Endothelial cell of umbilical vein (primary cell): ENCODE measurements at regions of chr11 and their contacts with region 1.

Region 1: DNA sequence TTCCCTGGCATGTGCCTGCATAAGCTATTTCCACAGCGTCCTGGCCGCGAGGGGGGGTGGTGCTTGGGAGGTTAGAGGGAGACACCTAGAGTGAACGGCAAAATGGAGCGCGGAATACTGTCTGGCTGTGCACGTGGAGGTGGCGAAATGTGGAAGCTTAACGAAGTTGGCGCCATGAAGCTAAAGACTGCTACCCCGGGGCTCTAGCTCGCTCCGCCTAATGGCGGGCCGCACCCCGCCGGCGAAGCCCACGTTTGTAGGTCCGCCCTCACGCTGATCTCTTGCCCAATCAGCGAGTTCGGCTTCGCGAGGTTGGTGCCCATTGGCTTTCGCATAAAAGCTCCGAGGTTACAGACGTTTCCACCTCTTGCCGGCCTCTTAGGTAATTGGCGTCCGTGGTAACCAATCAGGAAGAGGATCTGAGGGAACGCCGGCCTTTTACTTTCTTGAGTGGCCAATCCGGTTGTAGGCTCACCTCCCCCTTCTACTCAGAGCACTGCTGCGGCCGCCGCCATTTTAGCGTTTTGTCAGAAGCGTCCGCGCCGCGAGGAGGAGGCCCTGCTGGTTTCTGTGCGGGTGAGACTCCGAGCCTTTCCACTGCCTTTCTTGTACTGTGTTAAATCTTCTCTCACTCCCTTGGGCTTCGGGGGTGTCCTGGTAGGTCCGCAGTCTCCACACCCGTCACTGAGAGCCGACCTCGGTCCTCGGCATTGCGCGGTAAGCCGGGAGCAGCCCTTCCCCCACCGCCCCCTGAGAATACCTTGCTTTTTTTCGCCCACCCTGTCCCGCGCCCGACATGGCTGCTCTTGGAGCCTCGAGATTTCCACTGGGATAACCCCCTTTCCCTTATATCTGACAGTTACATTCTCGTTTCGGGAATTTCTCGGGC is at the start of gene RBM4:
- DNase-seq: peak; percentile 100
- H3K4me3 ChIP-seq: peak within 1 kb of the TSS; percentile 84 to 94 (median 89)
- H3K27ac ChIP-seq: peak within 1 kb of the TSS; percentile 72
- H3K4me1 ChIP-seq: peaks cover 45% of the 10 kb centered on the region
- H3K27me3 ChIP-seq: no peaks in the 10 kb centered on the region
- CTCF ChIP-seq: peak in 1 of 2 donors; percentile 21
- POLR2A ChIP-seq: peak; percentile 97
- total RNA-seq, gene RBM4: 148 and 153 TPM in 2 replicates

Region 2: DNA sequence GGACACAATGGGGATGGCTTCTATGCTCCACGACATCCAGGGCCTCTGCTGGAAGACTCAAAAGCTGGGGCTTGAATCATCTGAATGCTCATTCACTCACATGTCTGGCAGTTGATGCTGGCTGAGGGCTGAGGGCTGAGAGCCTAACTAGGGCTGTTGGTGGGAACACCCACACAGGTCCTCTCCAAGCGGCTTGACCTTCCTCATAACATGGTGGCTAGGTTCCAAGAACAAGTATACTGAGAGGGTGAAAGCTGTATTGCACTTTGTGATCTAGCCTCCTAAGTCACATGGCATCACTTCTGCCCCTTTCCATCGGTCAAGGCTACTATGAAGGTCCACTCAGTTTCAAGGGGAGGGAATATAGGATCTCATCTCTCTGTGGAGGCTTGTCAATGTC is 339.2 kb before region 1 on chr11:
- CTCF ChIA-PET with region 1: no interaction called
- POLR2A ChIA-PET with region 1: no interaction called
- dilution Hi-C with region 1: no loop called
- intact Hi-C with region 1: no loop called
- DNase-seq: no peak
- H3K4me3 ChIP-seq: no peak overlapping the region
- H3K27ac ChIP-seq: no peak overlapping the region
- H3K4me1 ChIP-seq: no peaks in the 10 kb centered on the region
- H3K27me3 ChIP-seq: peaks cover 0 to 2% of the 10 kb centered on the region in 2 experiments
- CTCF ChIP-seq: no peak
- POLR2A ChIP-seq: no peak

Region 3: DNA sequence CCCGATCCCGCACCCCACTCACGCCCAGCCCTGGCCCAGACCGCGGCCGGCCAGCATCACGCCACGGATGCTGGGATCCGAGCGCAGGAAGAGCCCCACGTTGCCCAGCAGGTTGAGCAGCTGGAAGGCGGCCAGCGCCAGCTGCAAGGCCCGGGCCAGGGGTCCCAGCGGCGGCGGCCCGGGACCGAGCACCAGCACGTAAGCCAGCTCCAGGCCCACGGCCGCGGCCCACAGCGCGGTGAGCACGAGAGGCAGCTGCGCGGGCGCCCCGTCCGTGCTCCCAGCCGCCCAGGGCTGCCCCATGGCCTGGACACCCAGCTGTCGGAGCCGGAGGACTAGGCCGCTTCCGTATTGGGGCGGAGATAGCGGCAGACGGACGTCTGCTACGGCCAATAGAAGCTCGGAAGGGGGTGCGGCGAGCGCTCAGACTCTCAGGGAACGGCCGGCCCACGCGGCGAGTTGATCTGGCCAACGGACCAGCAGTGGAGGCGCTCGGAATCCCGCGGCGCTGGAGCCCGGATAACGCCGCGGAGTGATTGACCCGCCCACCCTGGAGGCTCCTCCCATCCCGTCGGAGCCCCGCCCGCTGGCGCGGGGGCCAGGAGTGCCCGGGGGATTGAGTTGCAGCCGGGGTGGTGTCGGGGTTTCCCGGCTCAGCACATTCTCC is 92.6 kb before region 1 on chr11 and contains the start of gene ZDHHC24:
- CTCF ChIA-PET with region 1: interaction called, 3 read pairs
- POLR2A ChIA-PET with region 1: interaction called, 4 read pairs
- dilution Hi-C with region 1: no loop called
- intact Hi-C with region 1: loop called (anchors 1 kb)
- DNase-seq: peak; percentile 99
- H3K4me3 ChIP-seq: peak within 1 kb of the TSS; percentile 70 to 81 (median 78)
- H3K27ac ChIP-seq: peak within 1 kb of the TSS; percentile 62
- H3K4me1 ChIP-seq: peaks cover 33% of the 10 kb centered on the region
- H3K27me3 ChIP-seq: no peaks in the 10 kb centered on the region
- CTCF ChIP-seq: no peak
- POLR2A ChIP-seq: peak; percentile 90
- total RNA-seq, gene ZDHHC24: 18.3 and 20.1 TPM in 2 replicates

Region 4: DNA sequence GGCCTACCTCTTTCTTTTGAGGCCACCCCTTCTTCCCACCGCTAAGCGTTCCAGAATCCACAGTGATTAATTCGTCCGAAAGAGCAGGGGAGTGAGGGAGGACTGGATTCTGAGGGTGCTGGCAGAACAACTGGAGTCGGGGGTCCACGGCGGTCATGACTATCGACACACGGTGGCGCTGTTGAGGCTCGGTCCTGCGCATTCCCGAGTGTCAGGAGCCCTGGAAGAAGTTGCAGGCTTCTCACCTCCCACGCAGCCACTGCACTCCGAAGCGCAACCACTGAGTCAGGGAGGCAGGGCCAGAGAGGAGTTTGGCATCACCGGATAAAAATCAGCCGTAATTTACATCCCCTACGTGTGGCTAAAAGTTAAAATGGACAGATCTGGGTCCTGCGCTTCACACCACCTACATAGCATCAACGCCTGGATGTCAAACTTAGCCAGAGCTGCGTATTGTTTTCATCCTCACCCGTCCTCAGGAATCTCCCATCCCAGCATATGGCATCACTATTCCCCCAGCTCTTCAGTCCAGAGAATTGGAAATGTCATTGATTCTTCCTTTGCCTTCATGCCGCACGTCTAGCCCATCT is 59.3 kb before region 1 on chr11:
- CTCF ChIA-PET with region 1: interaction called, 14 read pairs
- POLR2A ChIA-PET with region 1: no interaction called
- dilution Hi-C with region 1: no loop called
- intact Hi-C with region 1: no loop called
- DNase-seq: peak; percentile 69
- H3K4me3 ChIP-seq: no peak overlapping the region
- H3K27ac ChIP-seq: no peak overlapping the region
- H3K4me1 ChIP-seq: no peaks in the 10 kb centered on the region
- H3K27me3 ChIP-seq: peaks cover 0 to 2% of the 10 kb centered on the region in 2 experiments
- CTCF ChIP-seq: peak; percentile 76 to 88
- POLR2A ChIP-seq: no peak

Region 5: GRCh38 chr11:66592457-66593302 is 45.7 kb before region 1 on chr11 and contains the starts of genes CCDC87 and CCS:
- CTCF ChIA-PET with region 1: interaction called, 6 read pairs
- POLR2A ChIA-PET with region 1: no interaction called
- dilution Hi-C with region 1: no loop called
- intact Hi-C with region 1: loop called (anchors 1 kb)
- DNase-seq: peak; percentile 97
- H3K4me3 ChIP-seq: peak within 1 kb of the TSS; percentile 22 to 63 (median 60)
- H3K27ac ChIP-seq: no peak within 1 kb of the TSS
- H3K4me1 ChIP-seq: peaks cover 5% of the 10 kb centered on the region
- H3K27me3 ChIP-seq: peaks cover 0 to 2% of the 10 kb centered on the region in 2 experiments
- CTCF ChIP-seq: peak; percentile 73 to 87
- POLR2A ChIP-seq: peak; percentile 98
- total RNA-seq, gene CCDC87: 0.22 and 0.28 TPM in 2 replicates
- total RNA-seq, gene CCS: 37.2 and 38.7 TPM in 2 replicates

Region 6: GRCh38 chr11:66616379-66617154 is 21.9 kb before region 1 on chr11 and contains the start of gene RBM14:
- CTCF ChIA-PET with region 1: interaction called, 5 read pairs
- POLR2A ChIA-PET with region 1: interaction called, 26 read pairs
- dilution Hi-C with region 1: no loop called
- intact Hi-C with region 1: loop called (anchors 1 kb)
- DNase-seq: peak; percentile 99
- H3K4me3 ChIP-seq: peak within 1 kb of the TSS; percentile 55 to 93 (median 75)
- H3K27ac ChIP-seq: peak within 1 kb of the TSS; percentile 86
- H3K4me1 ChIP-seq: peaks cover 24% of the 10 kb centered on the region
- H3K27me3 ChIP-seq: no peaks in the 10 kb centered on the region
- CTCF ChIP-seq: no peak
- POLR2A ChIP-seq: peak; percentile 98
- total RNA-seq, gene RBM14: 95.9 and 104 TPM in 2 replicates

Region 7: DNA sequence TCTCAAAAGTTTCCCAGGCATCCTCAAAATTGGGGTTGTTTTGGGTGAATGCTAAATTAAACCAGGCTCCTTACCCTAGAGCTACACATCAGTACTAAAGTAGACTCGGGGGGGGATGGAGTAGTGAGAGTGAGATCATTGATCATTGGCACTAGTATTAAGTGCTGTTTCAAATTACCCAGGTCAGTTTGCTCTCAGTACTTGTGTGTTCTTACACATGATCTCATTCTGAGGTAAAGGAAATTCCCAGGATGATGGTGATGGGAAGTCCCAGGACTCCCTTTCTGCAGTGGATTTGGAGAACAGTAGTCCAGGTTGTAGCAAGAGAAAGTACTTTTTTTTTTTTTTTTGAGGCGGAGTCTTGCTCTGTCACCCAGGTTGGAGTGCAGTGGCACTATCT is 12.6 kb after region 1 on chr11:
- CTCF ChIA-PET with region 1: interaction called, 6 read pairs
- POLR2A ChIA-PET with region 1: interaction called, 10 read pairs
- dilution Hi-C with region 1: no loop called
- intact Hi-C with region 1: no loop called
- DNase-seq: no peak
- H3K4me3 ChIP-seq: no peak overlapping the region
- H3K27ac ChIP-seq: no peak overlapping the region
- H3K4me1 ChIP-seq: no peaks in the 10 kb centered on the region
- H3K27me3 ChIP-seq: no peaks in the 10 kb centered on the region
- CTCF ChIP-seq: no peak
- POLR2A ChIP-seq: peak; percentile 26